PC-9 (cell line): ENCODE measurements at regions of chr7 and their contacts with region 1.

Region 1: GRCh38 chr7:43888993-43889945 is 17.1 kb downstream of the URGCP start:
- DNase-seq: no peak
- H3K4me3 ChIP-seq: no peak overlapping the region
- H3K27ac ChIP-seq: no peak overlapping the region
- H3K4me1 ChIP-seq: peaks cover 10% of the 10 kb centered on the region; the same call in 1 of the 2 replicates
- H3K27me3 ChIP-seq: no peaks in the 10 kb centered on the region
- CTCF ChIP-seq: no peak

Region 2: GRCh38 chr7:43942997-43943704 is 53.9 kb after region 1 on chr7:
- CTCF ChIA-PET with region 1: no interaction called
- POLR2A ChIA-PET with region 1: no interaction called
- intact Hi-C with region 1: loop called (anchors 5 kb)
- DNase-seq: peak; percentile 55 to 86
- H3K4me3 ChIP-seq: no peak overlapping the region
- H3K27ac ChIP-seq: no peak overlapping the region
- H3K4me1 ChIP-seq: peaks cover 23% of the 10 kb centered on the region
- H3K27me3 ChIP-seq: no peaks in the 10 kb centered on the region
- CTCF ChIP-seq: peak; percentile 68